Right cardiac atrium (tissue), 5 donors: ENCODE measurements at regions of chr6 and their contacts with region 1.

Region 1: DNA sequence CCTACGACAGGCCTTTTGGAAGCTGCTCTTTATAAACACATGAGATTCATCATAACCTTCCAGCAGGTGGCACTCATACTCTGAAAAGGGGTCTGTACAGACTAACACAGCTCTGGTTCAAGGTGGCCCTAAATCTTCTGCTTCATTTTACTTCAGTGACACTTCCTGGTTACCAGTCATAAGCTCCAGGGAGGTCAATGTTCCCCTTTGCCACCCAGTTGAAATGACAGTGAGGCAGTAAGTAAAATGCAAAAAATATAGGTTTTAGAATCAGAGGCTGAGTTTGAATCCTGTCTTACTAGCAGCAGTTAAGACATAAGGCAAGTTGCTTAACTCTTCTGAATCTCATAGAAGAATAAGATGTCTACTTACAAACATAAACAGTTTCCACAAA is 132.8 kb downstream of the CDK19 start:
- DNase-seq: no peak
- ATAC-seq: peak; percentile 96 to 97
- H3K4me3 ChIP-seq: no peak overlapping the region
- H3K27ac ChIP-seq: no peak overlapping the region
- H3K4me1 ChIP-seq: no peaks in the 10 kb centered on the region
- H3K27me3 ChIP-seq: no peaks in the 10 kb centered on the region

Region 2: DNA sequence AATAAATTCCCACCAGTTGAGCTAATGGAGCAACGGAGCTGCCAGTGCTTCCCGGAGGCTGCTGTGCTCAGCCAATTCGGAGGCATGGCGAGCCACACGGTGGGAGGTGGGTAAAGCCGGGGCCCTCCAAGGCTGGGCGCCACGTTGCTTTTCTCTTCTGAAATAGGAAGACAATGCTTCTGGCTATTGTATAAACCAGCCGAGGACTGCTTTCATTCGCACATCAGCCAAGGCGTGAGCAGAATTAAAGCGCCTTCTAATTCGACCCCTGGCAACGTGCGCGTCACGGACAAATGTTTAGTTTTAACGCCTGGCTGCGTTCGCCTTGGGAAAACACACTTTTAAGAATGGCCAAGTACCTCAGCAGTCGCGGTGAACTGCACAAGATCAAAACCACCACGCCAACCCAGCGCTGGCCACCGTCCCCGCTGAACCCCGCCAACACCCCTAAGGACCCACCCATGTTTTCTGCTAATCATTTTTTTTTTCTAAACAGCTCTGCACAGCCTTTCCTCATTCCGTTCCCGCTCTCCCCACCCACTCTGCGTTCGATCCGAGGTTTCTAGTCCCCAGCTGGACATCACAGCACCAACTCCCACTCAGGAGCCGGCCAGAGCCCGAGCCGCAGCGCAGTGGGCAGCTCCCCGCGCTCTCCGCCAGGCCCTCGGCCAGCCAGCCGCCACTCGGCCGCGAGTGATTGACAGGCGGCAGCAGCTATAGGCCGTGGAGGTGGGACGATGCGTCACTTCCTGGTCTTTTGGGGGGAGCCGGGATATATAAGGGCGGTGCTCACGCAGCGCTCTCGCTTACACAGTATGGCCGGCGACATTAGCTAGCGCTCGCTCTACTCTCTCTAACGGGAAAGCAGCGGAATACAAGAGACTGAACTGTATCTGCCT is 191.8 kb after region 1 on chr6 and contains the start of gene AMD1:
- intact Hi-C with region 1: loop called in 2 of 4 experiments (anchors 5 to 10 kb)
- DNase-seq: peak; percentile 98 to 99 (median 99)
- ATAC-seq: peak; percentile 94 to 96
- H3K4me3 ChIP-seq: peak within 1 kb of the TSS; percentile 96
- H3K27ac ChIP-seq: peak within 1 kb of the TSS; percentile 88
- H3K4me1 ChIP-seq: no peaks in the 10 kb centered on the region
- H3K27me3 ChIP-seq: no peaks in the 10 kb centered on the region
- total RNA-seq, gene AMD1: 58.0 to 65.2 (median 63.2) TPM

Region 3: DNA sequence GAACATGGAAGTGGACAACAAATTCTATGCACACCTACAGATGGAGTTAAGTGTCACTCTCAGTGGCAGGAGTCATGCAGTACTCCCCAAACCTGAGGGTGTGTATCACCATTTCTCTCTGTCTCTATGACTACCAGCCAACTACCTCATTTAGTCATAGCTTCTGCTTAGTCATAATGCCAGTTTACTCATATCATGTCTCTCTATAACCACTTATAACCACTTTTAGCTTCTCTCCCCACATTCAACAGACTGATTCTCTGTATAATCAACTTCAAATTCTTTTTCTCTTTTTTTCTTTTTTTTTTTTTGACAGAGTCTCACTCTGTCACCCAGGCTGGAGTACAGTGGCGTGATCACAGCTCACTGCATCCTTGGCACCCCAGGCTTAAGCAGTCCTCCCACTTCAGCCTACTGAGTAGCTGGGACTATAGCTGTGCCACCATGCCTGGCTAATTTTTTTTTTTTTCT is 262.3 kb after region 1 on chr6:
- intact Hi-C with region 1: loop called in 3 of 4 experiments (anchors 5 kb)
- DNase-seq: no peak
- ATAC-seq: peak in 1 of 2 donors; percentile 59
- H3K4me3 ChIP-seq: no peak overlapping the region
- H3K27ac ChIP-seq: no peak overlapping the region
- H3K4me1 ChIP-seq: no peaks in the 10 kb centered on the region
- H3K27me3 ChIP-seq: no peaks in the 10 kb centered on the region

Region 4: DNA sequence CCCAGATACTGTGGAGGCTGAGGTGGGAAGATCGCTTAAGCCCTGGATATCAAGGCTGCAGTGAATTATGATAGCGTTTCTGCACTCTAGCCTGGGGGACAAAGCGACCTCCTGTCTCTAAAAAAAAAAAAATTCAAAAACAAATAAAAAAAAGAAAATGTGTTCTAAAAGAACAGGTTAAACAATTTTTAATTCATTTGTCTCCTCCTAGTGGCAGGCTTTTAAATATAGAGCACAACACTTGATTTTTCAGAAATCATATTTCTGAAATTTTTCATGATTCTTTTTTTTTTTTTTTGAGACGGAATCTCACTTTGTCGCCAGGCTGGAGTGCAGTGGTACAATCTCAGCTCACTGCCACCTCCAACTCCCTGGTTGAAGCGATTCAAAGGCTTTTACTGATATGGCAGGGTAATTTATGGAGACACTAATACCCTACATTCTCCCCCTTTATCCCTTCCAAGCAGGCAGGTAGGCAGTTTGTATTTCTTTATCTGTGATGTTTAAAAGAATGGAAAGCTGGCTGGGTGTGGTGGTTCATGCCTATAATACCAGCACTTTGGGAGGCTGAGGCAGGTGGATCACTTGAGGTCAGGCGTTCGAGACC is 267.3 kb after region 1 on chr6:
- intact Hi-C with region 1: loop called (anchors 2 to 5 kb)
- DNase-seq: no peak
- ATAC-seq: no peak
- H3K4me3 ChIP-seq: no peak overlapping the region
- H3K27ac ChIP-seq: no peak overlapping the region
- H3K4me1 ChIP-seq: no peaks in the 10 kb centered on the region
- H3K27me3 ChIP-seq: no peaks in the 10 kb centered on the region